Mammary epithelial cell (primary cell): ENCODE measurements at regions of chr12 and their contacts with region 1.

Region 1: DNA sequence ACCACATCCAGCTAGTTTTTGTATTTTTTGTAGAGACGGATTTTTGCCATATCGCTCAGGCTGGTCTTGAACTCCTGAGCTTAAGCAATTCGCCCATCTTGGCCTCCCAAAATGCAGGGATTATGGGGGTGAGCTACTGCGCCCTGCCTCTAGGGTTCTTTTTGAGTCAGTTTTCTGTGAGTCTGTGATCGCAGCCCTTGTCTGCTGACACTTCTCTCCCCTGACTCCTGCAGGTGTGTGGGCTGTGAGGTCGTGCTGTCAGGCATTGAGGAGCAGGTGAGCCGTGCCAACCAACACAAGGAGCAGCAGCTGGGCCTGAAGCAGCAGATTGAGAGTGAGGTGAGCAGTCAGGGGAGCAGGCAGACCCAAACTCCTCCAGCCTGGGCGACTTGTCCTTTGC is 6.3 kb downstream of the COPS7A start:
- DNase-seq: no peak
- H3K4me3 ChIP-seq: no peak overlapping the region
- H3K27ac ChIP-seq: no peak overlapping the region
- H3K4me1 ChIP-seq: peaks cover 2% of the 10 kb centered on the region
- H3K27me3 ChIP-seq: no peaks in the 10 kb centered on the region
- CTCF ChIP-seq: no peak

Region 2: DNA sequence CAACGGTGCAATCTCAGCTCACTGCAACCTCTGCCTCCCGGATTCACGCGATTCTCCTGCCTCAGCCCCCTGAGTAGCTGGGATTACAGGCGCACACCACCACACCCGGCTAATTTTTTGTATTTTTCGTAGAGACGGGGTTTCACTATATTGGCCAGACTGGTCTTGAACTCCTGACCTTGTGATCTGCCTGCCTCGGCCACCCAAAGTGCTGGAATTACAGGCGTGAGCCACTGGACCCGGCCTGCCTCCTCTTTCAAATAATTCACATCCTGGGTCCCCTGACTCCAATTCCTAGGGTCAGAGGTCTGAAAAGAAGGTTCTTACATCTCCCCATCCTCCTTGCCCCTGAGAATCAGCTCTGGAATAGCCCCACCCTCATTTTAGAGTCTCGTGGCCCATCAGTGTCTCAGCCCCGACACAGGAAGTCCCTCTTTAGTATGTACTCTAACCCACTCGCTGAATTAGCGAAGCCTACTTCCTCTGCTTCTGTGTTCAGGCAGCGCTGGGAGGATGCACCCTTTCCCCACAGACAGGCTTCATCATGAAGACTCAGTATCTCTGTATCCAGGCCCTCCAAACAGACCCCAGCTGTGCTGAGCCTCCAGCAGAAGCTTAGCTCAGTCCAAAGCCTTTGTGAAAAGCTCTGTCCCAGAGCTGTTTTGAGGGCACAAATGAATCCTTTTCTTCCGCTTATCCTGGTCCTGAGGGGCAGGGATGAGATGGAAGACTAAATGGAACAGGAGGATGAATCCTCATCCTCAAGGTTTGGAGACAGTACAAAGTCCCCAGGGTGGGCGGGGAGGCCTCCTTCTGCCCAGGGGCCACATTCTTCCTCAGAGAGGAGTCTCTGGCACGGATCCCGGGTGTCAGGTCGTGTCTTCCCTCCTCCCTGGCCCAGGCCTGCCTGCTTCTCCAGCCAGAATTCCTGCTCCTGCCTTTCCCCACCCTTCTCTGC is 97.9 kb before region 1 on chr12:
- CTCF ChIA-PET with region 1: no interaction called
- dilution Hi-C with region 1: loop called (anchors 5 kb)
- in situ Hi-C with region 1: no loop called
- intact Hi-C with region 1: no loop called
- DNase-seq: no peak
- H3K4me3 ChIP-seq: no peak overlapping the region
- H3K27ac ChIP-seq: no peak overlapping the region
- H3K4me1 ChIP-seq: peaks cover 5% of the 10 kb centered on the region
- H3K27me3 ChIP-seq: no peaks in the 10 kb centered on the region
- CTCF ChIP-seq: no peak